Psoas muscle (tissue), 8 donors: ENCODE measurements at regions of chr21 and their contacts with region 1.

Region 1: GRCh38 chr21:31198575-31198974 is 145.5 kb downstream of the TIAM1 start:
- DNase-seq: no peak
- ATAC-seq: no peak
- H3K4me3 ChIP-seq: no peak overlapping the region
- H3K27ac ChIP-seq: no peak overlapping the region
- H3K4me1 ChIP-seq: no peaks in the 10 kb centered on the region
- H3K27me3 ChIP-seq: no peaks in the 10 kb centered on the region
- CTCF ChIP-seq: peak; percentile 46

Region 2: DNA sequence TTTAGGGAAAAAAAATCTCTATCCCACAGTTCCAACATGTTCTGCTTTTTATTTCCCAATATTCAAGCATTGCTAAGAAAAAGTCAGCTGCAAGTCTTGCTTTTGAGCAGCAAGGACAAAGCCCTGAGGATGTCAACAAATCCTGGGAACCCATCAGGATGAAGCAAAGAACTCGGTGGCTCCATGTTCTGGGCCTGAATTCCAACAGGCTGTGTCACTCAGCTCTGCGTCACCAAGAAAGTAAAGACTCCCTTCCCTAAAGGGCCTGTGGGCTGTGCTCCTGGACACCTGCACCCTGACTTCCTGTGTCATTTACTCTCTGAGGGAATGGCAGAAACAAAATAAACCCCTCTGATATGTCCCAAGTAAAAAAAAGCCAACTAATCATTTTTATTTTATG is 50.0 kb after region 1 on chr21:
- intact Hi-C with region 1: no loop called
- DNase-seq: peak in 1 of 2 donors; percentile 51
- ATAC-seq: peak in 1 of 4 donors; percentile 45
- H3K4me3 ChIP-seq: no peak overlapping the region
- H3K27ac ChIP-seq: no peak overlapping the region
- H3K4me1 ChIP-seq: no peaks in the 10 kb centered on the region
- H3K27me3 ChIP-seq: no peaks in the 10 kb centered on the region
- CTCF ChIP-seq: no peak

Region 3: GRCh38 chr21:31265366-31266013 is 66.9 kb after region 1 on chr21:
- intact Hi-C with region 1: no loop called
- DNase-seq: peak; percentile 42 to 74
- ATAC-seq: no peak
- H3K4me3 ChIP-seq: no peak overlapping the region
- H3K27ac ChIP-seq: no peak overlapping the region
- H3K4me1 ChIP-seq: no peaks in the 10 kb centered on the region
- H3K27me3 ChIP-seq: peaks cover 0 to 4% (median 2%) of the 10 kb centered on the region in 3 donors
- CTCF ChIP-seq: no peak

Region 4: GRCh38 chr21:31580866-31581276 is 382.3 kb after region 1 on chr21:
- intact Hi-C with region 1: loop called (anchors 2 to 10 kb)
- DNase-seq: peak; percentile 59 to 64
- ATAC-seq: peak in 3 of 4 donors; percentile 38 to 54 (median 53)
- H3K4me3 ChIP-seq: no peak overlapping the region
- H3K27ac ChIP-seq: no peak overlapping the region
- H3K4me1 ChIP-seq: no peaks in the 10 kb centered on the region
- H3K27me3 ChIP-seq: no peaks in the 10 kb centered on the region
- CTCF ChIP-seq: peak; percentile 53

Region 5: DNA sequence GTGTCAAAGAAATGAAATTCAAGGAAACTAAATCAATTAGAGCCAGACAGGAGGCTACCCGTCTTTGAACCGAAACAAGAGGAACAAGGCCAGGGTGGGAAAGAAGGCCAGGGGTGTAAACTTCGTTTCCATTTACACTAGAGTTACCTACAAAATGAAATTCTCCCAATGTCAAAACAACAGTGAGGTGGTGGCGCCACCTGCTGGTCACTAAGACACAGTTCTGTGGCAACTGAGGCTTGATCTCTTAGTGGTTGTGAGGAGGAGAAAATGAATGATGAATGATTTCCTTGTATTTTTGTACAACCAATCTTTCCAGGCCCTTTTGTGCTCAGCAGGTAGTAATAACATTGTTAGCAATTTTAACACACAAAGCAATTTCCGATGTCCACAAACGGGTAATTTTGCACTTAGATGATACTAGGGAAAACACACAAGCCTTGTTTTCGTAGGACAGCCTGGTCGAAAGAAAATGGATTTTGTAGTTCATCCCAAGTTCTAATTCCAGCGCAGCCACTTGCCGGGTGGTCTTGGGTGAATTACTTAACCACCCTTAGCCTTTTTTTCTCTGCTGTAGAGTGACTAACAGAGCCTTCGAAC is 406.1 kb after region 1 on chr21:
- intact Hi-C with region 1: loop called in 1 of 2 experiments (anchors 5 kb)
- DNase-seq: peak; percentile 38 to 79
- ATAC-seq: peak in 2 of 4 donors; percentile 47 to 53
- H3K4me3 ChIP-seq: no peak overlapping the region
- H3K27ac ChIP-seq: no peak overlapping the region
- H3K4me1 ChIP-seq: no peaks in the 10 kb centered on the region
- H3K27me3 ChIP-seq: no peaks in the 10 kb centered on the region
- CTCF ChIP-seq: peak; percentile 82